SK-N-SH (cell line): ENCODE measurements at regions of chr1 and their contacts with region 1.

Region 1: DNA sequence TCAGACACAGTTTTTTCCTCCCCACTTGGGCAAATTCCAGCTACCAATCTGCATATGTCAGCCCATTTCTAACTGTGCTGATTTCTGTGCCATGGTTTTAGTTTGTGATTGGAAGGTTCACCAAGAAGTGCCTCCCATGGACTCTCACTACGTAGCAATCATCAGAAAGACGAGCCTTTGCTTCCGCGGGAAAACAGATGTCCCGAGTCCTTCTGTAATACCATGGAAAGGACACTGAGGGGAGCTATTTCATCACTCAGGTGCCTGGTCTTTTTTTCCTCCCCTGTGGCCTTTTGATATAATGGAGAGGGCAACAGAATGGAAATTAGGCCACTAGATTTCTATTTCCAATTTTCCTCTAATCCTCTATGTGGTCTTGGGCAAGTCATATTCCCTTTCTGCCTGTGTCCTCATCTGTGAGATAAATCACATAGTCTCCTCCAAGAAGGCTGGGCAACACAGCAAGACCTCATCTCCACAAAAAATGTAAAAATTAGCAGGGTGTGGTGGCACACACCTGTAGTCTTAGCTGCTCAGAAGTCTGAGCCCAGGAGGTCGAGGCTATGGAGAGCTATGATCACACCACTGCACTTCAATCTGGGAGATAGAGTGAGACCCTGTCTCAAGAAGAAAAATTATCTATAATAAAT is 24.8 kb downstream of the LEMD1 start:
- DNase-seq: peak; percentile 75
- H3K4me3 ChIP-seq: peak overlapping the region in 1 of 2 experiments; percentile 38; a peak in 1 of 4 replicates
- H3K27ac ChIP-seq: no peak overlapping the region
- H3K4me1 ChIP-seq: no peaks in the 10 kb centered on the region
- H3K27me3 ChIP-seq: no peaks in the 10 kb centered on the region; the same call in 1 of the 2 replicates
- CTCF ChIP-seq: peak; percentile 65
- EP300 ChIP-seq: no peak
- RAD21 ChIP-seq: peak; percentile 94

Region 2: DNA sequence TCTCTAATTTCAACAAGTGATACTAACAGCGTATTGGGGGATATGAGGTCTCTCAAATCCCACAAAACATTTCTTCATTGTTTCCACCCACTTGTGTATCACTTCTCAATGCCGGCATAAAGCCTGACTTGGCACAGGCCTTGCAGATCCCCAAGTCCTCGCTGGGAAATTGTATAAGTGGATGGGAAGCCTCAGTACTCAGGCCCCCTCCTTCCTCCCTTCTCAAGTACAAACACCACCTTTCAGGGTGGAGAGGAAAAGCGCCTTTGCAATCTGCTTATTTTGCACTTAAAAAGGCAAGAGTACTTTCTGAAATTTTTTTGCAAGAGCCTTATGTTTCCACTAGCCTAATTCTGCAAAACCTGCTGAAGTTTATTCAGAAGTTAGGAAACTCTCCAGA is 14.5 kb before region 1 on chr1:
- CTCF ChIA-PET with region 1: interaction called, 29 read pairs
- POLR2A ChIA-PET with region 1: no interaction called
- DNase-seq: no peak
- H3K4me3 ChIP-seq: no peak overlapping the region
- H3K27ac ChIP-seq: no peak overlapping the region
- H3K4me1 ChIP-seq: no peaks in the 10 kb centered on the region
- H3K27me3 ChIP-seq: no peaks in the 10 kb centered on the region
- CTCF ChIP-seq: no peak
- EP300 ChIP-seq: no peak
- RAD21 ChIP-seq: no peak

Region 3: DNA sequence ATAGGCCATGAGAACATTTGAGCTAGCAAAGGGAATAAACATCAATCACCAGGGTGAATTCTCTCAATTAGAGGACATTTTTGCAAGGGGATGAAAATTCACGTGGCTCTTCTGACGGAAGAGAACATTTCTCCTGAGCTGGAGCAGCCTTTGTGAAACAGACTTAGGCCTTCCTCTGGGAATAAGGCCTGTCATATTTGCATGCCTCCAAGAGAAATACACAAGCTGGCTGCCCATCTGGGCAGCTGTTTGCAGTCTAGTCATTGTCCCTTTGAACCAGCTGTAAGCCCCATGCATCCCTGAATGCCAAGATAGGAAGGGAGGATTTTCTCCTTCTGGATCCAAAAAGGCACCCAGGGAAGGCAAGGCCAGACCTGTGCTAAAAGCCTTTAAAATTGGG is 19.2 kb after region 1 on chr1:
- CTCF ChIA-PET with region 1: interaction called, 11 read pairs
- POLR2A ChIA-PET with region 1: no interaction called
- DNase-seq: no peak
- H3K4me3 ChIP-seq: no peak overlapping the region
- H3K27ac ChIP-seq: no peak overlapping the region
- H3K4me1 ChIP-seq: no peaks in the 10 kb centered on the region; a peak in 1 of 4 replicates
- H3K27me3 ChIP-seq: peaks cover 17% of the 10 kb centered on the region
- CTCF ChIP-seq: no peak
- EP300 ChIP-seq: no peak
- RAD21 ChIP-seq: no peak

Region 4: GRCh38 chr1:205430696-205431305 is 33.7 kb after region 1 on chr1:
- CTCF ChIA-PET with region 1: no interaction called
- POLR2A ChIA-PET with region 1: no interaction called
- DNase-seq: no peak
- H3K4me3 ChIP-seq: peak overlapping the region in 1 of 2 experiments; percentile 35; a peak in 1 of 4 replicates
- H3K27ac ChIP-seq: no peak overlapping the region
- H3K4me1 ChIP-seq: no peaks in the 10 kb centered on the region; a peak in 1 of 4 replicates
- H3K27me3 ChIP-seq: peaks cover 52% of the 10 kb centered on the region
- CTCF ChIP-seq: peak; percentile 22; the same call in 1 of the 2 replicates
- EP300 ChIP-seq: no peak
- RAD21 ChIP-seq: no peak

Region 5: GRCh38 chr1:205458777-205459566 is 61.9 kb after region 1 on chr1:
- CTCF ChIA-PET with region 1: interaction called, 18 read pairs
- POLR2A ChIA-PET with region 1: no interaction called
- DNase-seq: no peak
- H3K4me3 ChIP-seq: no peak overlapping the region
- H3K27ac ChIP-seq: no peak overlapping the region
- H3K4me1 ChIP-seq: no peaks in the 10 kb centered on the region; a peak in 1 of 4 replicates
- H3K27me3 ChIP-seq: peaks cover 62% of the 10 kb centered on the region
- CTCF ChIP-seq: no peak
- EP300 ChIP-seq: no peak
- RAD21 ChIP-seq: no peak

Region 6: GRCh38 chr1:205493241-205494085 is 96.4 kb after region 1 on chr1:
- CTCF ChIA-PET with region 1: interaction called, 190 read pairs
- POLR2A ChIA-PET with region 1: no interaction called
- DNase-seq: peak; percentile 57
- H3K4me3 ChIP-seq: no peak overlapping the region
- H3K27ac ChIP-seq: 0 out of 4 replicates have a peak overlapping the region, but pooled peaks of 1 of the 2 experiments have one; percentile 3
- H3K4me1 ChIP-seq: peaks cover 20 to 21% of the 10 kb centered on the region in 2 experiments; a peak in 3 of 4 replicates
- H3K27me3 ChIP-seq: peaks cover 5% of the 10 kb centered on the region; the same call in 1 of the 2 replicates
- CTCF ChIP-seq: no peak
- EP300 ChIP-seq: peak in 1 of 2 experiments; percentile 37; a peak in 1 of 4 replicates
- RAD21 ChIP-seq: no peak